ENCODE measurements at regions of chr10 and their contacts with region 1.

Region 1: DNA sequence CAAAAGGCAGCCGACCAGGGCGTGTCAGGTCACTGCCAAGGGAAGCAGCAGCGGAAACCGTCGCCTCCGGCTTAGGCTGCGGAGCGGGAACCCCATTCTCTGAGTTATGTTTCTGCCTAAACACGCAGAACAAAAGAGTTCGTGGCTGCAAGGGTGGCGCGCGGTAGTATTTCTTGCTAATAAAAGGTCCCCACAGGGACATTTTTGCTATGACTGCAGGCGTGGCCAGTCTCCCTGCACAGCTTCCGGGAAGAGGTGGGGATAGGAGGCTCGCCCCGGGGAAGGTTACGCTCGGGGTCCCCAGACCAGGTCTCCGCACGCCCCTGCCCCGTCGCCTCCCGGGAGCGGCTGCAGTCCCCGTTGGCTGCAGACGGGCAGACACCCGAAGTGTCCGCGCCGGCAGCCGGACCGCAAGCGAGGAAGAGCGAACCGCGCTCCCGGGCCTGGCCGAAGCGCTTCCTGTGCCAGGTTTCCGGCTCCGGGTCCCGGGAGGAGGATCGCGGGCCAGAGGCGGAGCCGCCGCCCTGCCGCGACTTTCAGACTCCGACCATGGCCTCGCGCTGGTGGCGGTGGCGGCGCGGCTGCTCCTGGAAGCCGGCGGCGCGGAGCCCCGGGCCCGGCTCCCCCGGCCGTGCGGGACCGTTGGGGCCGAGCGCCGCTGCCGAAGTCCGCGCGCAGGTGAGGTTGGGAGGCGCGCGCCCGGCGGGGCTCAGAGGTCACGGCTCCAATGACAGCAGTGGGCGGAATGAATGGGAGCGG is at the start of gene PDSS1:
- DNase-seq: peak; percentile 34 to 77 (median 60)
- ATAC-seq: peak; percentile 77
- H3K4me3 ChIP-seq: peak within 1 kb of the TSS; percentile 77
- H3K4me3 Mint-ChIP-seq: peak within 1 kb of the TSS; percentile 92 to 100 (median 98)
- H3K27ac ChIP-seq: peak within 1 kb of the TSS; percentile 85
- H3K27ac Mint-ChIP-seq: peak within 1 kb of the TSS; percentile 94 to 99 (median 97)
- H3K4me1 ChIP-seq: peaks cover 7 to 17% of the 10 kb centered on the region in 2 donors
- H3K4me1 Mint-ChIP-seq: peaks cover 28 to 47% (median 34%) of the 10 kb centered on the region in 7 donors
- H3K27me3 ChIP-seq: no peaks in the 10 kb centered on the region
- H3K27me3 Mint-ChIP-seq: no peaks in the 10 kb centered on the region
- total RNA-seq, gene PDSS1: 3.8 to 15.2 (median 4.7) TPM

Region 2: GRCh38 chr10:25556466-25556865 is 1140.9 kb before region 1 on chr10:
- CTCF ChIA-PET with region 1: no interaction called
- POLR2A ChIA-PET with region 1: no interaction called
- intact Hi-C with region 1: no loop called
- DNase-seq: no peak
- ATAC-seq: no peak
- H3K4me3 ChIP-seq: no peak overlapping the region
- H3K4me3 Mint-ChIP-seq: no peak overlapping the region
- H3K27ac ChIP-seq: no peak overlapping the region
- H3K27ac Mint-ChIP-seq: no peak overlapping the region
- H3K4me1 ChIP-seq: no peaks in the 10 kb centered on the region
- H3K4me1 Mint-ChIP-seq: no peaks in the 10 kb centered on the region
- H3K27me3 ChIP-seq: no peaks in the 10 kb centered on the region
- H3K27me3 Mint-ChIP-seq: no peaks in the 10 kb centered on the region

Region 3: DNA sequence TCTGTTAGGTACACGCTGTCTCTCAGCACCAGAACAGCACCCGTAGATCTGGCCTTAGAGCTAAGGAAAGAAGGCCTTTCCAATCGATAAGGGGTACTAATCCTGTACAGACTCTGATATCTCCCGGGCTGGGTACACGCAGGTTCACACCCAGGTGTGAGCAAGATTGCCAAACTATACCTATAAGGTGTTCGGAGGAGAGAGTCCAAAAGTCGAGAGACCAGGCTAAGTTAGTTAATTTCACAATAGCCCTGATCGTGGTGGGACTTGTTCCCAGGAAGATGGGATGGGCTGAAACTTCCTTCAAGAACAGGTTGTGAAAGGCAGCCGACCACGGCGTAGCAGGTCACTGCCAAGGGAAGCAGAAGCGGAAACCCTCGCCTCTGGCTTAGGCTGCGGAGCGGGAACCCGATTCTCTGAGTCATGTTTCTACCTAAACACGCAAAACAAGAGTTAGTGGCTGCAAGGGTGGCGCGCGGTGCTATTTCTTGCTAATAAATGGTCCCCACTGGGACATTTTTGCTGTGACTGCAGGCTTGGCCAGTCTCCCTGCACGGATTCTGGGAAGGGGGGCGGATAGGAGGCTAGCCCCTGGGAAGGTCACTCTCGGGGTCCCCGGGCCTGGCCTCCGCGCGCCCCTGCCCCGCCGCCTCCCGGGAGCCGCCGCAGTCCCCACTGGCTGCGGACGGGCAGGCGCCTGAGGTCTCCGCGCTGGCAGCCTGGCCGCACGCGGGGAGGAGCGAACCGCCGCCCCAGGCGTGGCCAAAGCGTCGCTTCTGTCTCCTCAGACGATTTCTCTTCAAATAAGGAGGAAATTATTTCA is 75.2 kb before region 1 on chr10:
- CTCF ChIA-PET with region 1: no interaction called
- POLR2A ChIA-PET with region 1: interaction called, 3 read pairs
- intact Hi-C with region 1: loop called in 1 of 2 experiments (anchors 5 kb)
- DNase-seq: peak in 4 of 9 donors; percentile 10 to 27 (median 20)
- ATAC-seq: peak; percentile 78
- H3K4me3 ChIP-seq: no peak overlapping the region
- H3K4me3 Mint-ChIP-seq: peak overlapping the region; percentile 35 to 83 (median 76)
- H3K27ac ChIP-seq: peak overlapping the region; percentile 41
- H3K27ac Mint-ChIP-seq: peak overlapping the region in 7 of 9 donors; percentile 18 to 78 (median 52)
- H3K4me1 ChIP-seq: no peaks in the 10 kb centered on the region
- H3K4me1 Mint-ChIP-seq: peaks cover 0 to 17% (median 13%) of the 10 kb centered on the region in 7 donors
- H3K27me3 ChIP-seq: peaks cover 0 to 7% of the 10 kb centered on the region in 2 donors
- H3K27me3 Mint-ChIP-seq: peaks cover 9 to 45% (median 21%) of the 10 kb centered on the region in 5 donors

Region 4: DNA sequence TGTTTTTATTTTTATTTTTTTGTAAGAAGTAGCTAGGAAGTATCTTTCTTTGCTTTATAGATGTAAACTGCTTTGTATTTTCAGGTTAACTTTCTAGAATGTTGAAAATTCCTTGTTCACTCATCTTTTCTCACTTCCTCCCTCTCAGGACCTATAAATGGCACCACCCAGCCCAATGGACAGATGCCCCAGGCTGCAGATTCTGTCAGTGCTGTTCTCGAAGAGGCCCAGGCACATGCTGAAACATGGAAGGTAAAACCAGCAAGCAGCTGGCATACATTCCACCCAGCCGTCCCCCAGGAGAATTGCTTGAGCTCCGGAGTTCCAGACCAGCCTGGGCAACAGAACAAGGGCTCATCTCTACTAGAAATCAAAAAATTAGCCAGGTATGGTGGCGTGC is 46.9 kb before region 1 on chr10:
- CTCF ChIA-PET with region 1: no interaction called
- POLR2A ChIA-PET with region 1: no interaction called
- intact Hi-C with region 1: no loop called
- DNase-seq: no peak
- ATAC-seq: no peak
- H3K4me3 ChIP-seq: no peak overlapping the region
- H3K4me3 Mint-ChIP-seq: no peak overlapping the region
- H3K27ac ChIP-seq: no peak overlapping the region
- H3K27ac Mint-ChIP-seq: no peak overlapping the region
- H3K4me1 ChIP-seq: peaks cover 0 to 6% of the 10 kb centered on the region in 2 donors
- H3K4me1 Mint-ChIP-seq: peaks cover 0 to 33% (median 10%) of the 10 kb centered on the region in 7 donors
- H3K27me3 ChIP-seq: no peaks in the 10 kb centered on the region
- H3K27me3 Mint-ChIP-seq: no peaks in the 10 kb centered on the region

Region 5: GRCh38 chr10:26737730-26738129 is 40.4 kb after region 1 on chr10:
- CTCF ChIA-PET with region 1: no interaction called
- POLR2A ChIA-PET with region 1: no interaction called
- intact Hi-C with region 1: loop called in 1 of 2 experiments (anchors 5 kb)
- DNase-seq: peak in 1 of 9 donors; percentile 51
- ATAC-seq: peak; percentile 84
- H3K4me3 ChIP-seq: no peak overlapping the region
- H3K4me3 Mint-ChIP-seq: peak overlapping the region in 1 of 10 donors; percentile 7
- H3K27ac ChIP-seq: no peak overlapping the region
- H3K27ac Mint-ChIP-seq: peak overlapping the region in 7 of 9 donors; percentile 46 to 89 (median 69)
- H3K4me1 ChIP-seq: no peaks in the 10 kb centered on the region
- H3K4me1 Mint-ChIP-seq: peaks cover 0 to 59% (median 0%) of the 10 kb centered on the region in 7 donors
- H3K27me3 ChIP-seq: no peaks in the 10 kb centered on the region
- H3K27me3 Mint-ChIP-seq: no peaks in the 10 kb centered on the region